K562 (cell line): ENCODE measurements at regions of chr5 and their contacts with region 1.

Region 1: GRCh38 chr5:68433923-68434879 is 218.6 kb downstream of the PIK3R1 start:
- DNase-seq: peak; percentile 85 to 91 (median 86)
- ATAC-seq: peak; percentile 92
- H3K4me3 ChIP-seq: no peak overlapping the region
- H3K27ac ChIP-seq: peak overlapping the region; percentile 96
- H3K4me1 ChIP-seq: peaks cover 19 to 56% of the 10 kb centered on the region in 2 experiments
- H3K27me3 ChIP-seq: no peaks in the 10 kb centered on the region
- CTCF ChIP-seq: no peak
- EP300 ChIP-seq: peak; percentile 54; the same call in 1 of the 2 replicates
- POLR2A ChIP-seq: peak; percentile 56
- RAD21 ChIP-seq: peak in 1 of 2 experiments; percentile 18; a peak in 2 of 4 replicates

Region 2: GRCh38 chr5:68450232-68450852 is 16.1 kb after region 1 on chr5:
- CTCF ChIA-PET with region 1: no interaction called
- POLR2A ChIA-PET with region 1: interaction called, 10 read pairs
- in situ Hi-C with region 1: no loop called
- intact Hi-C with region 1: no loop called
- DNase-seq: no peak
- ATAC-seq: no peak
- H3K4me3 ChIP-seq: no peak overlapping the region
- H3K27ac ChIP-seq: no peak overlapping the region
- H3K4me1 ChIP-seq: peaks cover 0 to 19% of the 10 kb centered on the region in 2 experiments; a peak in 3 of 5 replicates
- H3K27me3 ChIP-seq: no peaks in the 10 kb centered on the region
- CTCF ChIP-seq: no peak
- EP300 ChIP-seq: no peak
- POLR2A ChIP-seq: no peak
- RAD21 ChIP-seq: no peak